ENCODE measurements at regions of chr14 and their contacts with region 1.

Region 1: DNA sequence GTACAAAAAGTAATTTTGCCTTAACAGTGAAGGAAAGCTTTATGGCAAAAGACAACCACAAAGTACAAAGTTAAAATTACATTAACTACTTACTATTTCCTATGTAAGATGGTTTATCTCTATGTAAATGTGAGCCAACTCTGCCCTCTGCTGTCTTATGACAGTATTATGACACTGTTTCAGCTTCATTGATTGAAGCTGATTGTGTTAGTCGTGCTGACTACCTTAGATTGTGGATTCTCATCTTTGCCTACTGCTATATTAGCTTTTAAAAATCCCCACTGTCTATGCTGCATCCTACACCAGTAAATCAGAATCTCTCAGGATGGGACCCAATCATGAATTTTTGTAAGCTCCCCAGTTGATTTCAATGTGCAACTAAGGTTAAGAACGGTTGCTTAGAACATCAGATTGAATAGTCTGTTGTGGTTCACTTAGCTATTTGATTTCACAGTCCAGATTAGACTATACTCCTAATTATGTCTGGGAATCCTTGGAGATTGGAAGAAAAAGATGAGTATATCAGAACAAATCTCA is 12.2 kb upstream of the SPTB start:
- DNase-seq: peak; percentile 25
- ATAC-seq: peak; percentile 92
- H3K4me3 Mint-ChIP-seq: no peak overlapping the region
- H3K27ac Mint-ChIP-seq: no peak overlapping the region
- H3K4me1 Mint-ChIP-seq: no peaks in the 10 kb centered on the region
- H3K27me3 Mint-ChIP-seq: peaks cover 9% of the 10 kb centered on the region

Region 2: DNA sequence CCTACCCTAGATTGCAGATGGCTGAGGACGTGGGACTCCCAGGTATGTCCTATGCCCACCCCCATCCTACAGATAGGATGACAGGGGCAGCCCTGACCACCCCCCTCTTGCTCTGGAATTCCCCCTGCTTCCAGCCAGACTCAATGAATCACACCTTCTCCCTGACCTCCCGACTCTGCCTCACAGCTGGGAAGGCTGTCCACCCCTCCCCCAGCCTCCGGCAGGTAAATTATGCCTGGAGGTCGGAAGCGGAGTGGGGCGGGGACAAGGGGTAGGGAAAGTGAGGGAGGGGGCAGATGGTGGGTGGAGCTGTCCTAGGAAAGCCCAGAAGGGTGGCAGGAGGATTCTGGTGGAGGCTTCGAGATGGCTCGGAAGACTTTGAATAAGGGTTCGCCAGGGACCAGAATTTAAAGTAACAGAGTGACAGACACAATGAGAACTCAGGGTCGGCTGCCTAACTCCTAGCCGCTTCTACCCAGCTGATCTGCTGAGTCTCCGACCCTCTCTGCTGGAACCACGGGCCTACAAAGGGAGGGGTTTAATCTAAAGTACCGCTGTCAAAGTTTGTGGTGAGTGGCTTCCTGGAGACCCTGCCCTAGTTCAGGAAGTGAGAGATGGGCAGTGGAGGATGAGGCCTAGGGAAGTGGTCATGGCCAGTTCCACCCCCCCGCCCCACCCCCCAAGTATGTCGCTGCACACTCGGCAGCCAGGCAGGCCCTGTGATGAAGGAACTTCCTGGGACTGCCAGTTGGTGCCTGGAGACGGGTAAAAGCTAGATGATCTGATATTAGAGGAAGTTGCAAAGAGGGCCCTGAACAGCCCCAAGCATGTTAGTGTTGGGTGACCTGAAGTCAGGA is 183.5 kb before region 1 on chr14:
- CTCF ChIA-PET with region 1: no interaction called
- POLR2A ChIA-PET with region 1: no interaction called
- intact Hi-C with region 1: no loop called
- DNase-seq: no peak
- ATAC-seq: peak; percentile 13
- H3K4me3 Mint-ChIP-seq: peak overlapping the region; percentile 13
- H3K27ac Mint-ChIP-seq: peak overlapping the region; percentile 32
- H3K4me1 Mint-ChIP-seq: peaks cover 34% of the 10 kb centered on the region
- H3K27me3 Mint-ChIP-seq: peaks cover 27% of the 10 kb centered on the region

Region 3: GRCh38 chr14:64745511-64746091 is 146.3 kb before region 1 on chr14:
- CTCF ChIA-PET with region 1: no interaction called
- POLR2A ChIA-PET with region 1: no interaction called
- intact Hi-C with region 1: no loop called
- DNase-seq: no peak
- ATAC-seq: no peak
- H3K4me3 Mint-ChIP-seq: no peak overlapping the region
- H3K27ac Mint-ChIP-seq: no peak overlapping the region
- H3K4me1 Mint-ChIP-seq: peaks cover 9% of the 10 kb centered on the region
- H3K27me3 Mint-ChIP-seq: peaks cover 1% of the 10 kb centered on the region

Region 4: GRCh38 chr14:64764641-64765520 is 127.0 kb before region 1 on chr14:
- CTCF ChIA-PET with region 1: interaction called, 15 read pairs
- POLR2A ChIA-PET with region 1: no interaction called
- intact Hi-C with region 1: loop called (anchors 5 kb)
- DNase-seq: peak; percentile 80
- ATAC-seq: peak; percentile 84
- H3K4me3 Mint-ChIP-seq: peak overlapping the region; percentile 42
- H3K27ac Mint-ChIP-seq: no peak overlapping the region
- H3K4me1 Mint-ChIP-seq: peaks cover 35% of the 10 kb centered on the region
- H3K27me3 Mint-ChIP-seq: no peaks in the 10 kb centered on the region

Region 5: DNA sequence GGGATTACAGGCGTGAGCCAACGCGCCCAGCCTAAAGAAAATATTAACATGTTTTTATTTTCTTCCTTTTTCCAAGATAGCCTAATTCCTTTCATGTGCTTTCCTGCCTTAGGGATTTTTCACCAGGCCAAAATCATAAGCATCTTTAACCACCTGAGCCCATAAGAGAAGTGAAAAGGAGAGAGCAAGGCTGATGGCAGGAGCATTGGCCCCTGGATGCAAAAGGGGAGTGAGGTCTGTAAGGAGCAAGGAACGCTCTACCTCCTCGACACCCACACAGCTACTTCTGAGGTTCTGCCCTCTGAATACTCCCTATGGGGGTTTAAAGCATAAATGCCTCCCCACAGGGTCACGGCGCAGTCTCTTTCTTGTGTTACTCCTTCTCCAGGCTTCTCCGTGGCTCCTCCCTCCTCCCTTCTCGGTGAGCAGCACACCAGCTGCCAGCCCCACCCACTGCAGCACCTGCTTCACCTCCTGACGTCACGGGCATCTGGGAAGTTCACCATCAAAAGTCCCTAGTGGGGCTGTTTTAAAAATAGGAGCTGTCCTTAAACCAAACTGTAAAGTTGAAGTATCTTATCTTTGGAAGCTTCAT is 79.6 kb before region 1 on chr14:
- CTCF ChIA-PET with region 1: interaction called, 15 read pairs
- POLR2A ChIA-PET with region 1: no interaction called
- intact Hi-C with region 1: no loop called
- DNase-seq: peak; percentile 67
- ATAC-seq: peak; percentile 78
- H3K4me3 Mint-ChIP-seq: no peak overlapping the region
- H3K27ac Mint-ChIP-seq: no peak overlapping the region
- H3K4me1 Mint-ChIP-seq: peaks cover 5% of the 10 kb centered on the region
- H3K27me3 Mint-ChIP-seq: peaks cover 4% of the 10 kb centered on the region

Region 6: DNA sequence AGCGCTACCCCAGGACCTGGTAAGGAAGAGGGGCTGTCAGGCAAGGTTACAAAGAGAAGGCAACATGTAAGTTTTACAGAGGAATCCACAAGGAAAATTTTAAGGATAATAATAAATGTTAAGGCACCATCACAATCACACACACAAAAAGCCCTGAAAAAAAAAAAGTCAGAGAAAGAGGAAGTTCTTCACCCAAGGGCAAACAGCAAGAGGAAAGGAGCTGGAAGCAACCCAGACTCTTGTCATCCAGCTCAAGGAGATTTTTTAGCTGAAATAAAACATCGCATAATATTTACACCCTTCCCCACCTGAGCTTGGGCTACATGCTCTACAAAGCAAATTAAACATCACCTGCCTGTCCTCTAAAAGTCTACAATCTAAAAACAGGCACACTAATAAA is 21.7 kb before region 1 on chr14:
- CTCF ChIA-PET with region 1: interaction called, 16 read pairs
- POLR2A ChIA-PET with region 1: no interaction called
- intact Hi-C with region 1: no loop called
- DNase-seq: no peak
- ATAC-seq: no peak
- H3K4me3 Mint-ChIP-seq: no peak overlapping the region
- H3K27ac Mint-ChIP-seq: no peak overlapping the region
- H3K4me1 Mint-ChIP-seq: no peaks in the 10 kb centered on the region
- H3K27me3 Mint-ChIP-seq: peaks cover 29% of the 10 kb centered on the region

Region 7: GRCh38 chr14:64906022-64906421 is 14.1 kb after region 1 on chr14:
- CTCF ChIA-PET with region 1: interaction called, 33 read pairs
- POLR2A ChIA-PET with region 1: no interaction called
- intact Hi-C with region 1: no loop called
- DNase-seq: no peak
- ATAC-seq: no peak
- H3K4me3 Mint-ChIP-seq: no peak overlapping the region
- H3K27ac Mint-ChIP-seq: no peak overlapping the region
- H3K4me1 Mint-ChIP-seq: no peaks in the 10 kb centered on the region
- H3K27me3 Mint-ChIP-seq: peaks cover 6% of the 10 kb centered on the region

Region 8: GRCh38 chr14:64955297-64955696 is 63.4 kb after region 1 on chr14:
- CTCF ChIA-PET with region 1: no interaction called
- POLR2A ChIA-PET with region 1: no interaction called
- intact Hi-C with region 1: no loop called
- DNase-seq: no peak
- ATAC-seq: no peak
- H3K4me3 Mint-ChIP-seq: no peak overlapping the region
- H3K27ac Mint-ChIP-seq: no peak overlapping the region
- H3K4me1 Mint-ChIP-seq: peaks cover 3% of the 10 kb centered on the region
- H3K27me3 Mint-ChIP-seq: no peaks in the 10 kb centered on the region

Region 9: DNA sequence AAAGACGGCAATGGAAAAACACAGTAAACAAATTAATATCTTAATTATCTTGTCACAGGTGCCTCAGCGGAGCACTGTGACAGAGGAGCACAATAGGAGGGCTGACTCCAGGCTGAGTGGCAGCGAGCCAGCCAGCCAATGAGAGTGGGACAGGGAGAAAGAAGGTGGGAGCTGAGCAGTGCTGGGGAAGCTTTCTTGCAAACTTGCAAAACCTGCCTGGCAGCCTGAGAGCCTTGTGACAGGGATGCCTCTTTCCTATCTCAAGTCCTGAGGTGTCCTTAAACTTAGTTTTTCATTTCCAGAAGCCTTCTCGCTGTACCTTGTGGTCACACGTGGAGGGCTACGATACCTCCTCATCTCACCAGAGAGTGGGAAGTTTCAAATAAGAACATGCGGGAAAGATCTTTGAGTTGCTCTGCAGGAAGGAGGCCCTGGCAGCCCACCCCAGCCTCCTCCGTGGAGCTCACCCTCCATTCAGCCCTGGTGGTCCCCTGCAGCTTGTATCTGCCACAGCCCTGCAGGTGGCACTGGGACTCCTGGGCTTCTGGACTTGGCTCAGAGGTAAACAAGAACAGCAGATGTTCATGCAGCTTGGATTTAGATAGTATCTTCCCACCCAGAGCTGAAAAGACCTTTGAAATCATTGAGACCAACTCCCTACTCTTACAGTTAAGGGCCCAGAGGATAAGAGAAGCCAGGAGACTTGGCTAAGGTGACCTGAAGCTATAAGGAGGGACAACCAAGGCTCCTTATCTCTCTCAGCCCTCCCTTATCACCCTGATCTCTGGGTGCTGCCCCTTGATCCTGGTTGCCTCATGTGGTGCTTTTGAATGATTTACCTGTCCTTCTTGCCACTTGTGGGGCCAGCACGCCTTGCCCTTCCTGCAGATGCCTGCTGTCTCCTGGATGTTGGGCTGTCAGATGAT is 363.9 kb after region 1 on chr14:
- CTCF ChIA-PET with region 1: no interaction called
- POLR2A ChIA-PET with region 1: no interaction called
- intact Hi-C with region 1: no loop called
- DNase-seq: no peak
- ATAC-seq: no peak
- H3K4me3 Mint-ChIP-seq: no peak overlapping the region
- H3K27ac Mint-ChIP-seq: no peak overlapping the region
- H3K4me1 Mint-ChIP-seq: peaks cover 12% of the 10 kb centered on the region
- H3K27me3 Mint-ChIP-seq: no peaks in the 10 kb centered on the region